WTC11 (cell line): ENCODE measurements at regions of chr4 and their contacts with region 1.

Region 1: DNA sequence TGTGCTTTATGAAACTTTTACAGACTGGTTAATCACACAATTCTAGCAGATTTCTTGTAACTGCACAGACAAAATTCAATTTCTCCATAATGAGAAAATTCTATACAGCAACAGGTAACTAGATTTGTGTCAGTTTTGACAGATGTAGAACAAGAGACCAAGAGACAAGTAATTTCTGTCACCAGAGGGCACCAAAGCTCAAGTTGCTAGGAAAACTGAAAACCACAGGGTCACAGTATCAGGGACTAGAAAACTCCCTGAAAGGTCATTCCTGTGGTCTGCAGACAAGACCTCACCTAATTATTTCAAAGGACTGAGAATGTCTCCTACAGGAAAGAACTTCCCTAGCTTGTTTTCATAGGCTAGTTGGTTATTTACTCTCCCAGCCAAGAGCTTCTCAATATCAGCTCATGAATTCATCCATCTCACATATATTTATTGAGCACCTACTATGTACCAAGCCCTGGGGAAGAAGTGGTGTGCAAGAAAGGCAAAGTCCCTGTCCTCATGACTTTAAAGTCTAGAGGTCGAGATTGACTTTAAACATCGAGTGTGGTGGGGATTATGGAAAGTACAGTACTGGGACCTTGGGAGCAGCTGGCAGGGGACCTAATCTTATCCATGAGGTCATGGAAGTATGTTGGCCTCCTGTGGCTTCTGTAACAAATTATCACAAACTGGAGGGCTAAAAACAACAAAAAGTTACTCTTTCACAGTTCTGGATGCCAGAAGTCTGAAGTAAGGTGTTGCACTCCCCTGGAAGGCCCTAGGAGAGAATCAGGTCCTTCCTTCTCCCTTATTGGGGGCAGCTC is 47.8 kb upstream of the SETD7 start:
- DNase-seq: peak; percentile 20
- ATAC-seq: peak; percentile 80
- H3K4me3 Mint-ChIP-seq: no peak overlapping the region
- H3K27ac Mint-ChIP-seq: no peak overlapping the region
- H3K4me1 Mint-ChIP-seq: 0 out of 2 replicates have a peak, but pooled peaks cover 11% of the 10 kb centered on the region
- H3K27me3 Mint-ChIP-seq: peaks cover 18% of the 10 kb centered on the region
- CTCF ChIP-seq: no peak

Region 2: GRCh38 chr4:139331185-139331584 is 272.6 kb before region 1 on chr4:
- CTCF ChIA-PET with region 1: no interaction called
- POLR2A ChIA-PET with region 1: no interaction called
- DNase-seq: no peak
- ATAC-seq: no peak
- H3K4me3 Mint-ChIP-seq: no peak overlapping the region
- H3K27ac Mint-ChIP-seq: no peak overlapping the region
- H3K4me1 Mint-ChIP-seq: peaks cover 15% of the 10 kb centered on the region
- H3K27me3 Mint-ChIP-seq: no peaks in the 10 kb centered on the region
- CTCF ChIP-seq: no peak

Region 3: DNA sequence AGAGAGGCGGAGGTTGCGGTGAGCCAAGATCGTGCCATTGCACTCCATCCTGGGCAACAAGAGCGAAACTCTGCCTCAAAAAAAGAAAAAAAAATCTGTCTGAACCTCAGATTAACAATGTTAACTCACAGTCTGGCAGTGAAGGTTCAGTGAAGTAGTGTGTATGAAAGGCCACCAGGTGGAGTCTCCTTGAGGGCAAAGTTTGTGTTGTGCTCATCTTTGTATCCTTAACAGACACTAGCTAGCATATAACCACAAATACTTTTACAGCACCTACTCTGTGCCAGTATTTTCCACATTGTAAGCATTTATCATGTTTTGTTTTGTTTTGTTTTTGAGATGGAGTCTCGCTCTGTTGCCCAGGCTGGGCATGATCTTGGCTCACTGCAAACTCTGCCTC is 15.9 kb after region 1 on chr4:
- CTCF ChIA-PET with region 1: interaction called, 20 read pairs
- POLR2A ChIA-PET with region 1: no interaction called
- DNase-seq: no peak
- ATAC-seq: peak; percentile 88
- H3K4me3 Mint-ChIP-seq: no peak overlapping the region
- H3K27ac Mint-ChIP-seq: no peak overlapping the region
- H3K4me1 Mint-ChIP-seq: peaks cover 19% of the 10 kb centered on the region
- H3K27me3 Mint-ChIP-seq: peaks cover 60% of the 10 kb centered on the region
- CTCF ChIP-seq: peak; percentile 40; the same call in 1 of the 2 replicates

Region 4: GRCh38 chr4:139633661-139634060 is 29.9 kb after region 1 on chr4:
- CTCF ChIA-PET with region 1: interaction called, 23 read pairs
- POLR2A ChIA-PET with region 1: no interaction called
- DNase-seq: peak; percentile 48
- ATAC-seq: peak; percentile 90
- H3K4me3 Mint-ChIP-seq: peak overlapping the region; percentile 71
- H3K27ac Mint-ChIP-seq: no peak overlapping the region
- H3K4me1 Mint-ChIP-seq: peaks cover 22% of the 10 kb centered on the region
- H3K27me3 Mint-ChIP-seq: peaks cover 75% of the 10 kb centered on the region
- CTCF ChIP-seq: 0 out of 2 replicates have a peak, but pooled peaks have one; percentile 22

Region 5: GRCh38 chr4:139651282-139652194 is 47.8 kb after region 1 on chr4:
- CTCF ChIA-PET with region 1: interaction called, 31 read pairs
- POLR2A ChIA-PET with region 1: no interaction called
- DNase-seq: peak; percentile 73
- ATAC-seq: peak; percentile 82
- H3K4me3 Mint-ChIP-seq: no peak overlapping the region
- H3K27ac Mint-ChIP-seq: no peak overlapping the region
- H3K4me1 Mint-ChIP-seq: no peaks in the 10 kb centered on the region; the same call in 1 of the 2 replicates
- H3K27me3 Mint-ChIP-seq: peaks cover 7% of the 10 kb centered on the region
- CTCF ChIP-seq: peak; percentile 90; the same call in 1 of the 2 replicates